PC-9 (cell line): ENCODE measurements at regions of chr5 and their contacts with region 1.

Region 1: DNA sequence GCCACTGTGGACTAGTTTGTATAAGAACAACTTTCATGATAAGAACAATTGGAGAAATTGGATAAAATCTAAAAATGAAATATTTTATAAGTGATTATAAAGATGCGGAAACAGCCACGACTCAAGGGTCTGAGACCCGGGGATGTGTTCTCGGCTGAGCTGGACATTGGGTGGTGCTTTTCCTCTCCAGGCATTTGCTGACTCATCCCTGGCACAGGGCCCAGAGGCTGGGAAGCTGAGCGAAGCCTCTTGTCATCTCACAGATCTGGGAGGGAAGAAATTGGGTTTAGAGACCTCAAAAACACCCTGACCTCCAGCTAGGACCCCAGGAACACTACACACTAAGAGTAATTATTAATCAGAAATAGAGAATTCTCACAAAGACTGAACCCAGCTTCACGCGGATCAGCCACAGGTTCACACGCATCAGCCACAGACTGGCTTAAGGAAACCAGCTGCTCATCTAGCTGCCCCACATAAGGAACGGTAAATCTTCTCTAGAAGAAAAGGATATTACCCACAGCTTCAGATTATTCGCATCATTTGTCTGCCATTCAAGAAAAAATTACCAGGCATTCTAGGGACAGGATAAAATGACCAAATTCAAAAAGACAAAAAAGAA is 2.8 kb upstream of the OR2V1 start:
- DNase-seq: peak; percentile 72 to 80
- H3K4me3 ChIP-seq: peak overlapping the region; percentile 7; the same call in 1 of the 2 replicates
- H3K27ac ChIP-seq: peak overlapping the region; percentile 73
- H3K4me1 ChIP-seq: peaks cover 27% of the 10 kb centered on the region
- H3K27me3 ChIP-seq: no peaks in the 10 kb centered on the region
- CTCF ChIP-seq: no peak

Region 2: GRCh38 chr5:180960209-180960608 is 173.5 kb before region 1 on chr5:
- CTCF ChIA-PET with region 1: no interaction called
- POLR2A ChIA-PET with region 1: no interaction called
- intact Hi-C with region 1: no loop called
- DNase-seq: no peak
- H3K4me3 ChIP-seq: no peak overlapping the region
- H3K27ac ChIP-seq: no peak overlapping the region
- H3K4me1 ChIP-seq: no peaks in the 10 kb centered on the region
- H3K27me3 ChIP-seq: no peaks in the 10 kb centered on the region
- CTCF ChIP-seq: no peak

Region 3: GRCh38 chr5:181217803-181218062 is 84.0 kb after region 1 on chr5:
- CTCF ChIA-PET with region 1: no interaction called
- POLR2A ChIA-PET with region 1: interaction called, 17 read pairs
- intact Hi-C with region 1: no loop called
- DNase-seq: peak in 1 of 2 experiments; percentile 54
- H3K4me3 ChIP-seq: peak overlapping the region; percentile 70
- H3K27ac ChIP-seq: peak overlapping the region; percentile 25
- H3K4me1 ChIP-seq: peaks cover 7% of the 10 kb centered on the region; the same call in 1 of the 2 replicates
- H3K27me3 ChIP-seq: no peaks in the 10 kb centered on the region
- CTCF ChIP-seq: no peak; the same call in 1 of the 2 replicates